MCF 10A (cell line): ENCODE measurements at regions of chr17 and their contacts with region 1.

Region 1: GRCh38 chr17:75707131-75707571 is 14.1 kb upstream of the ITGB4 start:
- DNase-seq: peak; percentile 94
- H3K4me3 Mint-ChIP-seq: peak overlapping the region; percentile 30
- H3K27ac Mint-ChIP-seq: peak overlapping the region; percentile 84
- H3K4me1 Mint-ChIP-seq: peaks cover 16% of the 10 kb centered on the region
- H3K27me3 Mint-ChIP-seq: no peaks in the 10 kb centered on the region
- CTCF ChIP-seq: no peak

Region 2: DNA sequence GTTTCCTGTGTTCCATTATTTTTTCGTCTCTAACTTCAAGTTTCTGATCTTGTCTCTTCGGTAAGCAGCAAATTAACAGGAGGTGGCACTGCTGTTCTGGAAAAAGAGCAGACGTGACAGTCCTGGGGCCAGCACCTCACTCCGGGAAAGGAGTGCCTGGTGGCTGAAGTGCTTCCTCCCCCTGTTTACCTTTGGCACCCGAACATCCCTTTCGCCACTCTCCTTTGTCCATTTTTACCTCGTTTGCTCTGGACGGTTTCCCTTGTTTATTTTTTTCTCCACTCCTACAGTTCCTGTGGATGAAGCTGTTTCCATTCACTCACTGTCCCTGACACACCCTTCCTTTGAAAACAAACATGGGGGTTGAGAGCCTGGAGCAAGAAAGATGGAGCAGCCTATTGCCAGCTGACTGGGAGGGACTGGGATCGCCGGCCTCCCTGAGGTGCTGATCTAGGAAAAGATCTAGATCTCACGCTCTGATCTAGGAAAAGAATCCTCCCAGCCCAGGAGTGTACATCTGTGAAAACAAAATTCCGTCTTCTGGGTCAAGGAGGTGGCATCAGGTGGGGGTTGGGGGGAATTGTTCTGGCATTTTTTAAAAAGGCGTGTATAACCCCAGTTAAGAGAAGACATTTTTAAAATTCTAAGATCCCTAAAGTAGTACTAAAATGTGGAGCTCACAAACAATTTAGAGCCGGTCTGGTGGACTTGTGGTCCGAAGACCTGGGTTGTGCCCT is 27.3 kb before region 1 on chr17:
- CTCF ChIA-PET with region 1: interaction called, 9 read pairs
- POLR2A ChIA-PET with region 1: interaction called, 36 read pairs
- intact Hi-C with region 1: no loop called
- DNase-seq: peak; percentile 92
- H3K4me3 Mint-ChIP-seq: peak overlapping the region; percentile 60
- H3K27ac Mint-ChIP-seq: peak overlapping the region; percentile 91
- H3K4me1 Mint-ChIP-seq: peaks cover 40% of the 10 kb centered on the region
- H3K27me3 Mint-ChIP-seq: no peaks in the 10 kb centered on the region
- CTCF ChIP-seq: peak; percentile 60

Region 3: DNA sequence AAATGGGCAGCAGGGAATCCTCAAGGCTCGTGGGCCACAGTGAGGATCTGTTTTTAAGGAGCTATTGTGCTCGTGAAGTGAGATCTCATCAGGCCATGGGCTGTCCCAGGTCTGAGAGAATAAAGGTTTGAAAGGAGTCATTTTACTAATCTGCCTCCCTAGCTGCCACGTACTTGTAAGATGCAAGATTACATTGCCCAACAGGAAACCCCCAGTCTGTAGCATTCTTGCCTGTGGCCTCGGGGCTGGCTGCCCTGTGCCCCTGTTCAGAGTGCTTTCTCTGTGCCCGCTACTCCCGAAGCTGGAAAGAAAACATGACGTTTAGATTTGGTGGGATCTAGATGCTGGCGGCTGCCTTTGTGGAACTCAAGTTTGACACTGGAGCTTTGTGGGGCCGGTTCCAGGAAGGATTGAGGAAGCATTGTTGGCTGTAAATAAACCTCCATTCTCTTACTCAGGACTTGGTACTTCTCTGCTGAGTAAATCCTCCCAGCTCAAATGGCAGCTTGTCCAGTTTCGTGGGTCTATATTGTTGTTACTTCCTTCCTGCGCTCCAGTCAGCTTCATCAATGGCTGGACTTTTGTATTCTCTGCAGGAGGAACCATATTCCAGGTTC is 18.8 kb before region 1 on chr17:
- CTCF ChIA-PET with region 1: interaction called, 5 read pairs
- POLR2A ChIA-PET with region 1: interaction called, 36 read pairs
- intact Hi-C with region 1: no loop called
- DNase-seq: peak; percentile 81
- H3K4me3 Mint-ChIP-seq: peak overlapping the region; percentile 0
- H3K27ac Mint-ChIP-seq: peak overlapping the region; percentile 90
- H3K4me1 Mint-ChIP-seq: peaks cover 75% of the 10 kb centered on the region
- H3K27me3 Mint-ChIP-seq: no peaks in the 10 kb centered on the region
- CTCF ChIP-seq: no peak

Region 4: GRCh38 chr17:75693500-75694481 is 13.4 kb before region 1 on chr17:
- CTCF ChIA-PET with region 1: interaction called, 12 read pairs
- POLR2A ChIA-PET with region 1: interaction called, 24 read pairs
- intact Hi-C with region 1: no loop called
- DNase-seq: peak; percentile 99
- H3K4me3 Mint-ChIP-seq: peak overlapping the region; percentile 28
- H3K27ac Mint-ChIP-seq: peak overlapping the region; percentile 96
- H3K4me1 Mint-ChIP-seq: peaks cover 73% of the 10 kb centered on the region
- H3K27me3 Mint-ChIP-seq: no peaks in the 10 kb centered on the region
- CTCF ChIP-seq: no peak

Region 5: GRCh38 chr17:75845049-75845860 is 138.1 kb after region 1 on chr17:
- CTCF ChIA-PET with region 1: no interaction called
- POLR2A ChIA-PET with region 1: no interaction called
- intact Hi-C with region 1: no loop called
- DNase-seq: peak; percentile 77
- H3K4me3 Mint-ChIP-seq: peak overlapping the region; percentile 16
- H3K27ac Mint-ChIP-seq: no peak overlapping the region
- H3K4me1 Mint-ChIP-seq: peaks cover 14% of the 10 kb centered on the region
- H3K27me3 Mint-ChIP-seq: no peaks in the 10 kb centered on the region
- CTCF ChIP-seq: peak; percentile 81

Region 6: GRCh38 chr17:75978938-75979704 is 272.0 kb after region 1 on chr17 and contains the starts of genes ACOX1 and TEN1:
- CTCF ChIA-PET with region 1: no interaction called
- POLR2A ChIA-PET with region 1: no interaction called
- intact Hi-C with region 1: no loop called
- DNase-seq: peak; percentile 98
- H3K4me3 Mint-ChIP-seq: peak within 1 kb of the TSS; percentile 100
- H3K27ac Mint-ChIP-seq: peak within 1 kb of the TSS; percentile 100
- H3K4me1 Mint-ChIP-seq: peaks cover 19% of the 10 kb centered on the region
- H3K27me3 Mint-ChIP-seq: no peaks in the 10 kb centered on the region
- CTCF ChIP-seq: no peak
- total RNA-seq, gene ACOX1: 23.4 and 26.0 TPM in 2 replicates
- total RNA-seq, gene TEN1: 13.0 and 15.4 TPM in 2 replicates

Region 7: DNA sequence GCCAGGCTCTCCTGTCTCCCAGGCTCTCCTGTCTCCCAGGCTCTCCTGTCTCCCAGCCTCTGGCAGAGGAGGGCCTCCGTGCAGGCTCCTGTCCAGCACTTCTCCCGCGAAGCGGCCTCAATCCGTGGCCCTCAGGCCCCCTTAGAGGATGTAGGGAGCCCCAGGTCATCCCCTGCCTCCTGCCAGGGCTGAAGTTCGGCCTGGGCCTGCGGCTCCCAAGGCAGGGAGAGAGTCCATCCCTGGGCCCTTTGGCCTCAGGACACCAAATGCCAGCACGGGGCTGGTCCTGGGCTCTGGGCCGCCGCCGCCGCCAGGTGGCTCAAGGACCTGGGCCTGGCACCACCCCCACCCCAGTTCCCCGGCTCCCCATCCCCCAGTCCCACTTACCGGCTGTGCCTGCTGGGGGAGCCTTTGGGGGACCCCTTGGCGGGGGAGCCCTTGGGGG is 319.6 kb after region 1 on chr17:
- CTCF ChIA-PET with region 1: no interaction called
- POLR2A ChIA-PET with region 1: no interaction called
- intact Hi-C with region 1: no loop called
- DNase-seq: peak; percentile 49
- H3K4me3 Mint-ChIP-seq: peak overlapping the region; percentile 80
- H3K27ac Mint-ChIP-seq: peak overlapping the region; percentile 74
- H3K4me1 Mint-ChIP-seq: peaks cover 6% of the 10 kb centered on the region
- H3K27me3 Mint-ChIP-seq: no peaks in the 10 kb centered on the region
- CTCF ChIP-seq: peak; percentile 7